B cell (primary cell): ENCODE measurements at regions of chr17 and their contacts with region 1.

Region 1: DNA sequence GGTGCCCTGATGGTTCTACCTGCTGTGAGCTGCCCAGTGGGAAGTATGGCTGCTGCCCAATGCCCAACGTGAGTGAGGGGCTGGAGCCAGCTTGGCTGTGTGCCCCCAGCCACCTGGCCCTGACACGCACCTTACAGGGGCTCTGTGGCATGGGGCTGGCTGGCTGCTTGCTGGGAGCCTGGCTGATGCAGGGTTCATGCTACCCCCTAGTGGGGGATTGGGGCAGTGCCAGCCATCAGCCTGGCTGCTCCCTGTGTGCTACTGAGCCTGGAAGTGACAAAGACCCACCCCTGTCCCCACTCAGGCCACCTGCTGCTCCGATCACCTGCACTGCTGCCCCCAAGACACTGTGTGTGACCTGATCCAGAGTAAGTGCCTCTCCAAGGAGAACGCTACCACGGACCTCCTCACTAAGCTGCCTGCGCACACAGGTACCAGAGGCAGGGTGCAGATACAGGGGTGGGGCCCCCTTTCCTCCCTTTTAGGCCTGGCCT is 5.7 kb downstream of the GRN start:
- DNase-seq: peak; percentile 83
- ATAC-seq: peak; percentile 41
- H3K4me3 ChIP-seq: no peak overlapping the region
- H3K4me3 Mint-ChIP-seq: peak overlapping the region; percentile 35
- H3K27ac ChIP-seq: no peak overlapping the region
- H3K27ac Mint-ChIP-seq: peak overlapping the region; percentile 58
- H3K4me1 ChIP-seq: peaks cover 40 to 46% of the 10 kb centered on the region in 2 donors
- H3K4me1 Mint-ChIP-seq: peaks cover 38% of the 10 kb centered on the region
- H3K27me3 ChIP-seq: no peaks in the 10 kb centered on the region
- H3K27me3 Mint-ChIP-seq: no peaks in the 10 kb centered on the region
- CTCF ChIP-seq: peak; percentile 85

Region 2: DNA sequence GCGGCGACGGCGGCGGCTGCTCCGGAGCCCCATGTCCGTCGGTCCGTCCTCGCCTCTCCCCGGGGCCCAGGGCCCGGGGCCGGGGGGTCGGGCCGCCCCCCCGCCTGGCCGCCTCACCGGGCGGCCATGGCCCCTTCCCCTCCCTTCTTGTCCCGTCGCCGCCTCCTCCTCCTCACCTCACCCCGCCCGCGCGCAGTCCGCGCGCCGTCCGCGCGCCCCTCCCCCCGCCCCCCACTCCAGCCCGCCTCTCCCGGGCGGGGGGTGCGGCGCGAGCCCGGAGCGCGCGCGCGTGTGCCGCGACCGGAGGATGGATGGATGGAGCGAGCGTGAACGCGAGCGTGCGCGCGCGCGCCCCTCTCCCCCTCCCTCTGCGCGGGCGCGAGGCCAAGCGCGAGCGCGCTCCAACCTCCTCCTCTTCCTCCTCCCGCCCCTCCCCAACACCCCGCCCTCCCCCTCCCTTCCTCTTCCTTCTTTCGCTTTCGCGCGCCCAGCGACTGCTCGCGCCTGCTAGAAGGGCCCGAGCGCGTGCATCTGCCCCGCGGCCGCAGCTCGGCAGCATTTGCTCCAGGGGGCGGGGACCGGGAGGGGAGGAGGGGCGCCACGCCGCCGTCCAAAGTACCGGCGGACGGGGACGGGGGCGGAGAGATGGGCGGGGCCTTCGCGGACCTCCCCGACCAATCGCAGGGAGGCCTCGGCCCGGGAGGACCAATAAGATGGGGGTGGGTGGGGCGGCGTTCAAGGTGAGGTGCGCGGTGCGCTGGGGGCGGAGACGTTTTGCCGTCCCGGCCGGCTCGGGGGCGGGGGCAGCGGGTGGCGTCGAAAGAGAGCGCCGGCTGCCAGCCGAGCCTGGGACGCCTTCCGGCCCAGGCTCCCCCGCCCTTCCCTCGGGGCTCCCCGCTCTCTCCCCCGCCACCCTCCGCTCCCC is 151.0 kb before region 1 on chr17 and contains the start of gene ATXN7L3:
- CTCF ChIA-PET with region 1: interaction called, 44 read pairs
- POLR2A ChIA-PET with region 1: interaction called, 8 read pairs
- intact Hi-C with region 1: loop called (anchors 1 kb)
- DNase-seq: peak; percentile 100
- ATAC-seq: peak; percentile 81
- H3K4me3 ChIP-seq: peak within 1 kb of the TSS; percentile 66 to 83 (median 81)
- H3K4me3 Mint-ChIP-seq: peak within 1 kb of the TSS; percentile 88
- H3K27ac ChIP-seq: peak within 1 kb of the TSS; percentile 89 to 90
- H3K27ac Mint-ChIP-seq: peak within 1 kb of the TSS; percentile 95
- H3K4me1 ChIP-seq: peaks cover 30 to 43% of the 10 kb centered on the region in 2 donors
- H3K4me1 Mint-ChIP-seq: peaks cover 46% of the 10 kb centered on the region
- H3K27me3 ChIP-seq: no peaks in the 10 kb centered on the region
- H3K27me3 Mint-ChIP-seq: no peaks in the 10 kb centered on the region
- CTCF ChIP-seq: no peak
- total RNA-seq, gene ATXN7L3: 107 and 119 TPM in 2 replicates

Region 3: GRCh38 chr17:44363613-44364159 is 12.9 kb after region 1 on chr17 and contains the start of gene FAM171A2:
- CTCF ChIA-PET with region 1: interaction called, 52 read pairs
- POLR2A ChIA-PET with region 1: interaction called, 4 read pairs
- intact Hi-C with region 1: loop called (anchors 1 kb)
- DNase-seq: peak; percentile 82
- ATAC-seq: peak; percentile 91
- H3K4me3 ChIP-seq: peak within 1 kb of the TSS in 4 of 5 experiments; percentile 29 to 70 (median 56)
- H3K4me3 Mint-ChIP-seq: peak within 1 kb of the TSS; percentile 88
- H3K27ac ChIP-seq: no peak within 1 kb of the TSS
- H3K27ac Mint-ChIP-seq: no peak within 1 kb of the TSS
- H3K4me1 ChIP-seq: peaks cover 10 to 17% of the 10 kb centered on the region in 2 donors
- H3K4me1 Mint-ChIP-seq: peaks cover 9% of the 10 kb centered on the region
- H3K27me3 ChIP-seq: peaks cover 0 to 35% (median 13%) of the 10 kb centered on the region in 4 experiments
- H3K27me3 Mint-ChIP-seq: peaks cover 39% of the 10 kb centered on the region
- CTCF ChIP-seq: peak; percentile 87
- total RNA-seq, gene FAM171A2: 0.69 and 1.00 TPM in 2 replicates